A549 (cell line): ENCODE measurements at regions of chr2 and their contacts with region 1.

Region 1: DNA sequence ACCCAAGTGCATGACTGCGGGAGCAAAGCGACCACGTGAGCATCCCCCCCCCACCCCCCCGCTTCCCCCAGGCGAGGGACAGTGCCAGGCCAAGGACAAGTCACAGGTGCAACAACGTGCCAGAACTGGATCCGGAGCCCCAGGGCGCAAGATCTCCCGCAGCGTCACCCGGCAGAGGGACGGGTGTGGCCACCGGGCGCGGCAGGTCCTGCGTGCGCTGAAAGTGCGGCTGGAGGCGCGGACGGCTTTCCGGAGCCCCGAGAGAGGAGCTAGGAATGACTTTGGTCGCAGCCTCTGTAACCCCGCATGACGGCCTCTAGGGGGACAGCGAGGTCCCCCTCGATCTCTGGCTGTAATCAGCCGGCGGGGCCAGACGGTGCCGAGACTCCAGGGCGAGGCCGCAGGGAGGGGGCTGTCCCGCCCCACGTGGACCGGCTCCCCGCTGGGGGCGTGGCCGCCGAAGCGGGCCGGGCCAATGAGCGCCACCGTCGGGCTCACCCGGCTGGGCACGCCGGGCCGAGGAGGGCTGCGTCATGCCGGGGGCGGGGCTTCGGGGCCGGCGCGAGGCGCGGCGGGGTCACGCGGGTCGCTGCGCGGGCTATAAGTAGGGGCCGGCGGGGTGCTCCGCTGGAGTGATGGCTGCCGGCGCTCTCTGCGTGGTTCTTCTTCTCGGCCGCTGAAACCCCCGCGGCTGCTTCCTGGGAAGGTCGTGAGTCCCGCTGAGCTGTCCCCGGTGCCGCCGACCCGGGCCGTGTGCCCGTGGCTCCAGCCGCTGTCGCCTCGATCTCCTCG is at the start of gene SLC20A1:
- DNase-seq: peak; percentile 81 to 94
- ATAC-seq: peak; percentile 83 to 94
- H3K4me3 ChIP-seq: peak within 1 kb of the TSS; percentile 98
- H3K27ac ChIP-seq: peak within 1 kb of the TSS; percentile 98 to 99
- H3K4me1 ChIP-seq: peaks cover 43% of the 10 kb centered on the region
- CTCF ChIP-seq: peak; percentile 45
- EP300 ChIP-seq: peak in 1 of 2 experiments; percentile 28; a peak in 1 of 5 replicates
- POLR2A ChIP-seq: peak; percentile 95
- RAD21 ChIP-seq: peak; percentile 32 to 53; a peak in 4 of 5 replicates
- polyA plus RNA-seq, gene SLC20A1: 86.8 and 88.7 TPM in 2 replicates

Region 2: DNA sequence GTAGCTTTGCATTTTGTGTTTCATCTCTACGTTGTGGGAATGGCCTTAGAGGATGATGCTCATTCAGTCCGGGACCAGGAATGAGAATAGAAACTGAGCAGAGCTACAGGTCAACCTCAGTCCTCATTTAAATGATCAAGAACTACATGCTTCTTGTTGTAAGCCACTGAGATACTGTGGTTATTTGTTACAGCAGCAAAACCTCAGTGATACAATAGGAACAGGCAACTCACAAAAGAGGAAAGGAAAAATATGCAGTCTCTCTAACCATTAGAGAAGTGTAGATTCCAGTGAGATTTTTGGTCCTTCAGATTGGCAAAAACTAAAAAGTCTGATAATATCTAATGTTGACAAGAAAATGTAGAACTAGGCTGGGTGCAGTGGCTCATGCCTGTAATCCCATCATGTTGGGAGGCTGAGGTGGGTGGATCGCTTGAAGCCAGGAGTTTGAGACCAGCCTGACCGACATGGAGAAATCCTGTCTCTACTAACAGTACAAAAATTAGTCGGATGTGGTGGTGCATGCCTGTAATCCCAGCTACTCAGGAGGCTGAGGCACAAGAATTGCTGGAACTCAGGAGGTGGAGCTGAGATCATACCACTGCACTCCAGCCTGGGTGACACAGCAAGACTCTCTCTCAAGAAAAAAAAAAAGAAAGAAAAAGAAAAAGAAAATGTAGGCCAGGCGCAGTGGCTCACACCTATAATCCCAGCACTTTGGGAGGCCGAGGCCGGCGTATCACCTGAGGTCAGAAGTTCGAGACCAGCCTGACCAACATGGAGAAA is 47.8 kb before region 1 on chr2:
- CTCF ChIA-PET with region 1: interaction called, 31 read pairs
- POLR2A ChIA-PET with region 1: interaction called, 6 read pairs
- DNase-seq: no peak
- ATAC-seq: no peak
- H3K4me3 ChIP-seq: no peak overlapping the region
- H3K27ac ChIP-seq: no peak overlapping the region
- H3K4me1 ChIP-seq: peaks cover 12% of the 10 kb centered on the region
- CTCF ChIP-seq: no peak
- EP300 ChIP-seq: no peak
- POLR2A ChIP-seq: no peak
- RAD21 ChIP-seq: no peak

Region 3: GRCh38 chr2:112658820-112659667 is 13.5 kb after region 1 on chr2:
- CTCF ChIA-PET with region 1: interaction called, 13 read pairs
- POLR2A ChIA-PET with region 1: interaction called, 18 read pairs
- DNase-seq: peak in 1 of 2 experiments; percentile 41
- ATAC-seq: peak; percentile 68 to 73
- H3K4me3 ChIP-seq: no peak overlapping the region
- H3K27ac ChIP-seq: no peak overlapping the region
- H3K4me1 ChIP-seq: peaks cover 45% of the 10 kb centered on the region
- CTCF ChIP-seq: no peak
- EP300 ChIP-seq: no peak
- POLR2A ChIP-seq: no peak
- RAD21 ChIP-seq: no peak

Region 4: DNA sequence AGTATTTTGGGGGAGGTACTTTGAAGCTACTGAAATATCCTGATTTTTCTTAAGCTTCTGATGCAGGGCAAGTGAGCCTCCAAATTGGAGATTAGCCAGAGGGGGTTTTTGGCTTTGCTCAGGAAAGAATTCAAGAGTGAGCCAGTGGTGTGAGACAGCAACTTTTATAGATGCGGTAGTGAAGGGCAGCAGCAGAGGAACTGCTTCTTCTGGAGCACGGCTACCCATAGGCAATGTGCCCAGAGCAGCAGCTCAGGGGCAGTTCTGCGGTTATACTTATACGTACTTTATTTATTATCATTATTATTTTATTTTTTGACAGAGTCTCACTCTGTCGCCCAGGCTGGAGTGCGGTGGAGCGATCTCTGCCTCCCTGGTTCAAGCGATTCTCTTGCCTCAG is 55.5 kb after region 1 on chr2:
- CTCF ChIA-PET with region 1: no interaction called
- POLR2A ChIA-PET with region 1: no interaction called
- DNase-seq: no peak
- ATAC-seq: no peak
- H3K4me3 ChIP-seq: no peak overlapping the region
- H3K27ac ChIP-seq: peak overlapping the region in 1 of 2 experiments; percentile 14; a peak in 1 of 6 replicates
- H3K4me1 ChIP-seq: no peaks in the 10 kb centered on the region
- CTCF ChIP-seq: no peak
- EP300 ChIP-seq: no peak
- POLR2A ChIP-seq: no peak
- RAD21 ChIP-seq: no peak